SK-N-SH (cell line): ENCODE measurements at regions of chr9 and their contacts with region 1.

Region 1: GRCh38 chr9:121545875-121546423 is 46.3 kb upstream of the GGTA1 start:
- DNase-seq: peak; percentile 98
- H3K4me3 ChIP-seq: peak overlapping the region; percentile 20 to 50; a peak in 2 of 4 replicates
- H3K27ac ChIP-seq: no peak overlapping the region
- H3K4me1 ChIP-seq: peaks cover 0 to 8% of the 10 kb centered on the region in 2 experiments; a peak in 1 of 4 replicates
- H3K27me3 ChIP-seq: no peaks in the 10 kb centered on the region
- CTCF ChIP-seq: peak; percentile 88
- EP300 ChIP-seq: no peak
- RAD21 ChIP-seq: peak; percentile 97

Region 2: GRCh38 chr9:120985810-120986222 is 560.1 kb before region 1 on chr9:
- CTCF ChIA-PET with region 1: no interaction called
- POLR2A ChIA-PET with region 1: no interaction called
- DNase-seq: peak; percentile 59
- H3K4me3 ChIP-seq: no peak overlapping the region
- H3K27ac ChIP-seq: no peak overlapping the region
- H3K4me1 ChIP-seq: peaks cover 0 to 2% of the 10 kb centered on the region in 2 experiments; a peak in 1 of 4 replicates
- H3K27me3 ChIP-seq: no peaks in the 10 kb centered on the region
- CTCF ChIP-seq: peak; percentile 72
- EP300 ChIP-seq: no peak
- RAD21 ChIP-seq: peak; percentile 78

Region 3: DNA sequence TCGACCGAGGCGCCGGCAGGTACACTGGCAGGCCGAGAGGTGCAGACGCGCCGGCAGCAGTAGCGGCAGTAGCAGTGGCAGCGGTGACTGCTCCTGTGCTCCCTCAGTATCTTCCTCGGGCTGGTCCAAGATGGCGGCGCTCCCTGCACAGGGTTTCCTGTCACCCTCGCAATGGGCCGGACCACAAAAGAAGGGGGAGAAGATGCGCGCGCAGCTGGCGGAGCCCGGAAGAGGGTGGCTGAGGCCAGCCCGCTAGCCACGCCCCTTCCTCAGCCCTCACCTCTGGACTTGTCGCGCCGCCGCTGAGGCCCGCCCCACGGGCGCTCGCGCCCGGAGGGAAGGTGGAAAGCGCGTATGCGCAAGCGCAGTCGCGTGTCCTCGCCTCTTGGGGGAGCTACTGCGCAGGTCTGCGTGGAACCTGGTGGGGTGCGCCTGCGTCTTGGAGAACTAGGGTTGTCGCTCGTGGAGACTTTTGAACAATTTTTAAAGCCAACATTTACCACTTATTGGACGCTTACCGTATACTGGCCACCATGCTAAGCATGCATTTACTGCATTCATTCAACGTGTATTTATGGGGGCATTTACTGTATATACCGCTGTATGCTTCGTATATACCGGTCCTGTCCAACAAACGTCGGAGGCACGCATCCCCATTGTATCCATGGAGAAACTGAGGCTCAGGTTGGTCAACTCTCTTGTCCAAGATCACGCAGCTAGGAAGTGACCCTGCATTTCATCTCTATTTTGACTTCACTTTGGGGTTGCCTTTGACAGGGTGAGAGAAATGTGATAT is 344.0 kb before region 1 on chr9 and contains the start of gene RAB14:
- CTCF ChIA-PET with region 1: no interaction called
- POLR2A ChIA-PET with region 1: no interaction called
- DNase-seq: peak; percentile 100
- H3K4me3 ChIP-seq: peak within 1 kb of the TSS; percentile 89 to 96
- H3K27ac ChIP-seq: peak within 1 kb of the TSS; percentile 71 to 95; a peak in 3 of 4 replicates
- H3K4me1 ChIP-seq: peaks cover 7 to 32% of the 10 kb centered on the region in 2 experiments; a peak in 3 of 4 replicates
- H3K27me3 ChIP-seq: no peaks in the 10 kb centered on the region
- CTCF ChIP-seq: peak; percentile 56
- EP300 ChIP-seq: no peak
- RAD21 ChIP-seq: peak; percentile 11; the same call in 1 of the 2 replicates
- polyA plus RNA-seq, gene RAB14: 12.9 and 17.4 TPM in 2 replicates

Region 4: GRCh38 chr9:121529237-121529987 is 16.5 kb before region 1 on chr9:
- CTCF ChIA-PET with region 1: interaction called, 37 read pairs
- POLR2A ChIA-PET with region 1: interaction called, 5 read pairs
- DNase-seq: peak; percentile 83
- H3K4me3 ChIP-seq: no peak overlapping the region
- H3K27ac ChIP-seq: peak overlapping the region; percentile 78 to 84
- H3K4me1 ChIP-seq: peaks cover 0 to 13% of the 10 kb centered on the region in 2 experiments; a peak in 1 of 4 replicates
- H3K27me3 ChIP-seq: no peaks in the 10 kb centered on the region
- CTCF ChIP-seq: no peak
- EP300 ChIP-seq: peak; percentile 24 to 65; a peak in 2 of 4 replicates
- RAD21 ChIP-seq: no peak

Region 5: GRCh38 chr9:121576281-121577075 is 30.5 kb after region 1 on chr9:
- CTCF ChIA-PET with region 1: interaction called, 17 read pairs
- POLR2A ChIA-PET with region 1: no interaction called
- DNase-seq: no peak
- H3K4me3 ChIP-seq: no peak overlapping the region
- H3K27ac ChIP-seq: no peak overlapping the region
- H3K4me1 ChIP-seq: peaks cover 0 to 20% of the 10 kb centered on the region in 2 experiments; a peak in 1 of 4 replicates
- H3K27me3 ChIP-seq: no peaks in the 10 kb centered on the region
- CTCF ChIP-seq: no peak
- EP300 ChIP-seq: no peak
- RAD21 ChIP-seq: peak; percentile 42

Region 6: GRCh38 chr9:121609845-121610570 is 64.1 kb after region 1 on chr9:
- CTCF ChIA-PET with region 1: interaction called, 15 read pairs
- POLR2A ChIA-PET with region 1: no interaction called
- DNase-seq: no peak
- H3K4me3 ChIP-seq: no peak overlapping the region
- H3K27ac ChIP-seq: peak overlapping the region; percentile 3 to 34; a peak in 2 of 4 replicates
- H3K4me1 ChIP-seq: peaks cover 28 to 39% of the 10 kb centered on the region in 2 experiments; a peak in 3 of 4 replicates
- H3K27me3 ChIP-seq: no peaks in the 10 kb centered on the region
- CTCF ChIP-seq: no peak
- EP300 ChIP-seq: peak in 1 of 2 experiments; percentile 20; a peak in 1 of 4 replicates
- RAD21 ChIP-seq: no peak

Region 7: DNA sequence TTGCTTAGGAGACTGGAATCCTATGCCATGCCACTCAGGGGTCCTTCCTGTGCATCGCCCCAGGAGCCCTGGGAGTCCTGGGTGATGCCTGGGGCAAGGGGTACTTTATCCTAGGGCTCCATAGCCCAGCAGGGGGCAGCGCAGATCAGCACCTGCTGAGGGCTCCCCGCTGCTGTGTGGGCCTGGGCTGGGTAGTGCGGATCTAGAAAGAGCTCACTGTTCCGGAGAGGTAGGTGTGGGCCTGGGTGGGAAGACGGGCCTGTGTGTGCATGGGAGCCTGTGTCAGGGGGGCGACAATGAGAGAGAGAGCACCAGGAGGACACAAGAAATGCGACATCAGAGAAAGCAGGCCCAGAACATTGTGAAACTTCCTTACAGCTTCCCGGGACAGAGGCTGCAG is 94.1 kb after region 1 on chr9:
- CTCF ChIA-PET with region 1: interaction called, 17 read pairs
- POLR2A ChIA-PET with region 1: no interaction called
- DNase-seq: peak; percentile 75
- H3K4me3 ChIP-seq: no peak overlapping the region
- H3K27ac ChIP-seq: no peak overlapping the region; a peak in 1 of 4 replicates
- H3K4me1 ChIP-seq: peaks cover 8 to 48% of the 10 kb centered on the region in 2 experiments; a peak in 3 of 4 replicates
- H3K27me3 ChIP-seq: no peaks in the 10 kb centered on the region
- CTCF ChIP-seq: peak; percentile 64
- EP300 ChIP-seq: no peak
- RAD21 ChIP-seq: peak; percentile 66

Region 8: GRCh38 chr9:121686930-121687541 is 141.1 kb after region 1 on chr9:
- CTCF ChIA-PET with region 1: interaction called, 21 read pairs
- POLR2A ChIA-PET with region 1: no interaction called
- DNase-seq: peak; percentile 85
- H3K4me3 ChIP-seq: no peak overlapping the region; a peak in 1 of 4 replicates
- H3K27ac ChIP-seq: no peak overlapping the region
- H3K4me1 ChIP-seq: peaks cover 0 to 4% of the 10 kb centered on the region in 2 experiments; a peak in 1 of 4 replicates
- H3K27me3 ChIP-seq: no peaks in the 10 kb centered on the region
- CTCF ChIP-seq: peak; percentile 93
- EP300 ChIP-seq: no peak
- RAD21 ChIP-seq: peak; percentile 89

Region 9: DNA sequence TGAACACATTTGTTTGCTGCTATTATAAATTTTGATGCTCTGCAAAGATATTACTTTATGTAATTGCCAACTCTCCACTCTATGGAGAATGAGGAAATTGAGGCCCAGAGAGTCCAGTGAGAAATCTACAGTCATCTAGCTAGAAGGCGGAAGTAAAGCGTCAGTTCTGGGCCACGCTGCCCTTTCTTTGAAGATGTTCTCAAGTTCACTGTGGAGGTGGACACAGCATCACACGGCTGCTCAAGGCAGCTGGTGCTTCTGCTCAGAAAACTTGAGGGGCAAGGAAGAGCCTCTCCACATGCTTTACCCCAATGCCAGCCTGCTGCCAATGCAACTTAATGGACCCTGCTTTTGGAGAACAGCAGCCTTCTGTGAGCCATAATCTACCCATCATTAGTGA is 450.8 kb after region 1 on chr9:
- CTCF ChIA-PET with region 1: interaction called, 27 read pairs
- POLR2A ChIA-PET with region 1: interaction called, 4 read pairs
- DNase-seq: no peak
- H3K4me3 ChIP-seq: no peak overlapping the region
- H3K27ac ChIP-seq: no peak overlapping the region
- H3K4me1 ChIP-seq: peaks cover 0 to 4% of the 10 kb centered on the region in 2 experiments; a peak in 2 of 4 replicates
- H3K27me3 ChIP-seq: no peaks in the 10 kb centered on the region
- CTCF ChIP-seq: no peak
- EP300 ChIP-seq: no peak
- RAD21 ChIP-seq: no peak